ENCODE measurements at regions of chr13 and their contacts with region 1.

Region 1: GRCh38 chr13:60969656-60970055 is 446.0 kb downstream of the PCDH20 start:
- DNase-seq: no peak
- ATAC-seq: peak in 5 of 8 donors; percentile 29 to 86 (median 56)
- H3K4me3 ChIP-seq: no peak overlapping the region
- H3K27ac ChIP-seq: no peak overlapping the region
- H3K4me1 ChIP-seq: peaks cover 0 to 11% (median 0%) of the 10 kb centered on the region in 9 donors
- H3K27me3 ChIP-seq: no peaks in the 10 kb centered on the region
- CTCF ChIP-seq: no peak

Region 2: DNA sequence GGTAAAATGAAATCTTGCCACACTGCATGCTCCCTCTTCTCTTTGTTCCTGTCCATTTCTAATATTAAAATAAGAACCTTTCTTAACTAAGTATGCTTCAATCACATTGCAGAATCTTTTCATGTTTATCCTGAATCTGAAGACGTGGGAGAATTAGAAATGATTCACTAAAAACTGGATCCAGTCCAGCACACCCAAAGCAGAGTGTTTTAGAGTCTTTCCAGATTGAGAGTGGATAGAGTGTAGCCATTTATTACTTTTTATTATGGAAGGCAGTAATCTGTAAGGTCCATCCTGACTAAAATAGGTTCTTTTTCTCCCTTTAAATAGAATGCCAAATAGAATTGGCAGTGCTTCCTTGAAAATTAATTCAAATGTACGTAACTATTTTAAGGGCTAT is 119.1 kb before region 1 on chr13:
- intact Hi-C with region 1: no loop called
- DNase-seq: no peak
- ATAC-seq: no peak
- H3K4me3 ChIP-seq: no peak overlapping the region
- H3K27ac ChIP-seq: no peak overlapping the region
- H3K4me1 ChIP-seq: no peaks in the 10 kb centered on the region
- H3K27me3 ChIP-seq: no peaks in the 10 kb centered on the region
- CTCF ChIP-seq: no peak

Region 3: DNA sequence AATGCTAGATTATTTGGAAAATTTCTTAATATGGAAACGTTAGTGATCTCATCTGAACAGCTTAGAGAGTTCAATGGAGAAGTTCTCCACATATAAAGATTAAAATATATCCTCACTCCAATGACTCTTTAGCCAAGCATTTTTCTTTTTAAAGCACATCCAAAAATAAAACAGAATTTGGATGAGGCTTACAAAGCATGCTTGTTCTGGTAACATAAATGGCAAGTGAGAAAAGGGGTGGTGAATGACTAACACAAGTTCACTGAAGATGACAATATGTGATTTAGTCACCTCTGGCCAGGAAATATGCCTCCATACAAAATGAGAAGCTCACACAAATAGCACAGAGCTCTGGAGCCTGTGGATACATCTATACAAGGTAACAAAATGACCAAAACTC is 193.0 kb after region 1 on chr13:
- intact Hi-C with region 1: loop called in 1 of 10 experiments (anchors 10 kb)
- DNase-seq: no peak
- ATAC-seq: peak; percentile 65 to 95 (median 86)
- H3K4me3 ChIP-seq: no peak overlapping the region
- H3K27ac ChIP-seq: peak overlapping the region in 9 of 10 donors; percentile 32 to 83 (median 64)
- H3K4me1 ChIP-seq: peaks cover 0 to 21% (median 12%) of the 10 kb centered on the region in 9 donors
- H3K27me3 ChIP-seq: no peaks in the 10 kb centered on the region
- CTCF ChIP-seq: no peak